ENCODE measurements at regions of chr1 and their contacts with region 1.

Region 1: DNA sequence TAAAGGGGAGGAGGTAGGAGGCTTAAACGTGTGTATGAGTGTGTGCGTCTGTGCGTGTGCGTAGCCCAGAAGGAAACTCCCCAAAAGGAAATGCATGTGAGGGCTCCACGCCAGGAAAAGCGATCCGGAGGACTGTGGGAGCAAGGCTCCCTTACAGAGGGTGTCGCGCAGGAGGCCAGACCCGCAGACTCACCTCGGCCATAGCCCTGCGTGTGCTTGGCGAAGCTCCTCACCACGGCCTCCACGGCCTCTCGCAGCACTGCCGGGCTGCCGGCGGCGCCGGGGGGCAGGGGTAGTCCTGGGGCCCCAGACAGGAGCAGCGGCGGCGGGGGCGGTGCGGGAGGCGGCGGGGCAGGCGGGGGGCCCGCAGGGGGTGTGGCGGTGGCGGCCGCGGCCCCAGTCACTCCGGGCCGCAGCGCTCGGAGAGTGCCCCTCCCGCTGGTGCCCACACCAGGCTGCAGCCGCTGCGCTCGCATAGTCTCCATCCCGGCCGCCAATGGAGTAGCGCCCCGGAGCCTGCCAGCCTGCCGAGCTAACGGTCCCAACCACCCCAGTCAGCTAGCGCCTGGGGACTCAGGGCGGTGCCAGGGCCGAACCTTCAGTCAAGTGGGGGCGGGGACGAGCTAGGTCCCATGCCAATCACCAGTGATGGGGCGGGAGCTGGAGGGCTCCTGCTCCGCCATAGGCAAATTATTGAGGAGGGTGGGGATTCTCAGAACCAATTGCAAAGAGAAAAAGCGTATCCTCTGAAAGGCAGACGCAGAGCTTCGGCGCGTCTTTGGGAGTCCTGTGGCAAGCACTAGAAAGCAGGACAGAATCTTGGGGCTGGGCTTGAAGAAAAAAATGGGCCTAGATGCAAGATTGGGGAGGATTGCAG is at the start of gene LIX1L:
- DNase-seq: peak; percentile 99
- ATAC-seq: peak; percentile 81
- H3K4me3 ChIP-seq: peak within 1 kb of the TSS; percentile 76
- H3K27ac ChIP-seq: 0 out of 2 replicates have a peak within 1 kb of the TSS, but pooled peaks have one; percentile 1
- H3K4me1 ChIP-seq: peaks cover 43% of the 10 kb centered on the region
- H3K27me3 ChIP-seq: no peaks in the 10 kb centered on the region
- CTCF ChIP-seq: no peak
- total RNA-seq, gene LIX1L: 12.5 and 13.6 TPM in 2 replicates

Region 2: DNA sequence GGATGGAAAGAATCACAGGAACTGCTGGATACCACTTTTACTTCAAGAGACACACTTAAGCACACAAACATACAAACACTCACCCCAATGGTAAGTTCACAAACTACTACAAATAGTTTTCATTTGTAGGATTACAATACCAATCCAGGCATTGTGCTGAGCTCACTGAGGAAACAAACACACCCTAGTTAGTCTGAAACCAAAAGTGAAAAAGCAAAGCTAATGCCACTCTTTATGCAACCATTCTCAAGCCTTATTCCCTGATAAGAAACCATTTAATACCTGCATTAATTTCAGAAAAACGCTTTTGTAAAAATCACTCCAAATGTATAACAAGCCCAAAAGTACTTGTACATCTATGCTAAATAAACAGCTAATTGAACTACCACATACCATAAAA is 172.1 kb before region 1 on chr1:
- CTCF ChIA-PET with region 1: no interaction called
- POLR2A ChIA-PET with region 1: no interaction called
- intact Hi-C with region 1: no loop called
- DNase-seq: peak; percentile 18
- ATAC-seq: peak; percentile 8; the same call in 1 of the 2 replicates
- H3K4me3 ChIP-seq: no peak overlapping the region
- H3K27ac ChIP-seq: no peak overlapping the region
- H3K4me1 ChIP-seq: peaks cover 40% of the 10 kb centered on the region
- H3K27me3 ChIP-seq: no peaks in the 10 kb centered on the region
- CTCF ChIP-seq: no peak

Region 3: DNA sequence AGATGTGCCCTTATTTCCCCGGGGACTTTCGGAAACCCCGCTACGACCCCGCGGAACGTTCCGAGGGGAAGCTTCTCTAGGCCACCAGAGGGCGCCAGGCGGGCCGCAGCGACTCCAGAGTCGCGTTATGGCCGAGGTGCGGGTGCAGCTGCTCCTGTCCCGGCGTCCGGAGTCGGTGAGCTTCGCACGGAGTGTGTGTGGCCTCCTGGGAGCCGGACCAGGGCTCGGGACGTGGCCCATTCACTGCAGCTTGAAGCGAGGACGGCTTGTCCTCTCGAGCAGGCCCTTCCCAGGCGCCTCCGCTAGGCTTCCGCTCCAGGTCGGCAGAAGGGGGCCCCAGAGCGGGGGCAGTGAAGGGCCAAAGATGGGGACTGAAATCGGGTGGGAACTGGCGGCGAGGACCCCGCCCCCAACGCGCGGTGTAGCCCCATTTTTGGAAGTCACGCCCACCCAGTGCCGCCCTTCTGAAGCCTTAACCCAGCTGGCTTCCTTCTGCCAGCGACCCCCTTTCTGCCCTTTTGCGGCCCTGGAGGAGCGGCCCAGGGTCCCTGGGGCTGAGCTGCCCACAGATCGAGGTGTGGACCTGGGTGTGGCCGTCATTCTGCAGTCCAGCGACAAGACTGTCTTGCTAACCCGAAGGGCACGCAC is 112.0 kb before region 1 on chr1 and contains the start of gene NUDT17:
- CTCF ChIA-PET with region 1: interaction called, 10 read pairs
- POLR2A ChIA-PET with region 1: no interaction called
- intact Hi-C with region 1: no loop called
- DNase-seq: peak; percentile 78
- ATAC-seq: peak; percentile 77
- H3K4me3 ChIP-seq: peak within 1 kb of the TSS; percentile 66
- H3K27ac ChIP-seq: no peak within 1 kb of the TSS
- H3K4me1 ChIP-seq: peaks cover 5% of the 10 kb centered on the region; the same call in 1 of the 2 replicates
- H3K27me3 ChIP-seq: no peaks in the 10 kb centered on the region
- CTCF ChIP-seq: peak; percentile 98
- total RNA-seq, gene NUDT17: 2.4 and 3.0 TPM in 2 replicates

Region 4: DNA sequence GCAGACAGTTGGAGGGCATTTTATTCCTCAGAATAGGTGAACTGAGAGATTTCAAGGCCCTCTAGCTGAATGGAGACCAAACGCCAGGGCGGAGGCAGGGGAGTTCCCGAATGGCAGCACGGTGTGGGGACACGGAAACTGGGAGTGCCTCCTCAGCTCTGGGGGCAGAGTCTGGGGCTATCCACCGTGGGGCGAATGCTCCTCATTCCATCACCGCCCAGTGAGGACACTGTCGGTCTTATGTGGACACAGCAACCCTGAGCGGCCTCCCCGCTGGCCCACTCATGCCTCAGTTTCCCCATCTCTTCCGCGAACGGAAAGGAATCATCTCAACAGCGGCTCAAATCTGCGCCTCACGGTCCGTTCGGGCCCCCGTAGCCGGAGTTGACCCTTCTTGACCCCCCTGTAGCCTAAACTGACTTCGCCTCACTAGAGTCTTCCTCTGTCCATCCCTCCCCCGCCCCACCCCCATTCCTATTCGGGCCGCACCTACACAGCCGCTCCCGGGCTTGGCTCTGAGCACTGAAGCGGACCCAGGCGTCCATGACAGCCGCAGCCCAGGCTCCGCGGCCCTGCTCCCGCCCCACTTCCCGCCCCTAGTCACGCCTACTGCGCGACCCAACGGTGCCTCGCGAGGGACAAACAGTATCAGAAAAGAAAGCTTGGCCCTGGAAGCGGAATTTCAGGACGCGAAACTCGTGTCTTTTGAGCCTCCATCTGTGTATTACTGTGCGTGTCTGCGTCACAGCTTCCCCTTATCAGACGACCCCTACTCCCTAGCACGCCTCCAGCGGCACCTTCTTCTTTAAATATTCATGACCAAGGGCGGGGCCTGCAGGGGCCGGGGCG is 39.3 kb before region 1 on chr1 and contains the start of gene PEX11B:
- CTCF ChIA-PET with region 1: interaction called, 3 read pairs
- POLR2A ChIA-PET with region 1: interaction called, 5 read pairs
- intact Hi-C with region 1: loop called (anchors 5 kb)
- DNase-seq: peak; percentile 86
- ATAC-seq: peak; percentile 79
- H3K4me3 ChIP-seq: peak within 1 kb of the TSS; percentile 81
- H3K27ac ChIP-seq: peak within 1 kb of the TSS; percentile 72
- H3K4me1 ChIP-seq: peaks cover 24% of the 10 kb centered on the region
- H3K27me3 ChIP-seq: no peaks in the 10 kb centered on the region
- CTCF ChIP-seq: no peak
- total RNA-seq, gene PEX11B: 27.4 and 31.3 TPM in 2 replicates

Region 5: GRCh38 chr1:145927063-145927886 is 30.4 kb before region 1 on chr1 and contains the start of gene RBM8A:
- CTCF ChIA-PET with region 1: interaction called, 6 read pairs
- POLR2A ChIA-PET with region 1: interaction called, 12 read pairs
- intact Hi-C with region 1: loop called (anchors 1 kb)
- DNase-seq: peak; percentile 99
- ATAC-seq: peak; percentile 99
- H3K4me3 ChIP-seq: peak within 1 kb of the TSS; percentile 75
- H3K27ac ChIP-seq: peak within 1 kb of the TSS; percentile 83
- H3K4me1 ChIP-seq: peaks cover 13% of the 10 kb centered on the region
- H3K27me3 ChIP-seq: no peaks in the 10 kb centered on the region
- CTCF ChIP-seq: peak; percentile 81
- total RNA-seq, gene RBM8A: 459 and 482 TPM in 2 replicates

Region 6: DNA sequence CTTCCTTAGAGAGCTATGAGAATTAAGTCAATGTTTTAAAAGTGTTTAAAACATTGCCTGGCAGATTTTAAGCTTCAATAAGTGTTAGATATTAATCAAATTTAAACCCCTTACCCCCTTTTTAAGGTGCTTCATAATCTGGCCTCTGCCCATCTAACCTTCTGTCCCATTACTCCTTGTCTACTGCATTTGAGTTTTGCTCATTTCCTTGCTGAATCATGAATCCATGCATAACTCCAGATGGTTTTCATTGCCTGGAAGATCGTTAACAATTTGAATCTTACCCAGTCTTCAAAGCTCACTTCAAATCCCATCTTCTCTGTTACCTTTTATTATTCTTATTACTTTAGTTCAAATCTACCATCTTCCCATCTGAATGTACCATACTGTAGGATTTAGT is 59.2 kb after region 1 on chr1:
- CTCF ChIA-PET with region 1: no interaction called
- POLR2A ChIA-PET with region 1: no interaction called
- intact Hi-C with region 1: no loop called
- DNase-seq: no peak
- ATAC-seq: no peak
- H3K4me3 ChIP-seq: no peak overlapping the region
- H3K27ac ChIP-seq: no peak overlapping the region
- H3K4me1 ChIP-seq: peaks cover 4% of the 10 kb centered on the region; the same call in 1 of the 2 replicates
- H3K27me3 ChIP-seq: 0 out of 2 replicates have a peak, but pooled peaks cover 6% of the 10 kb centered on the region
- CTCF ChIP-seq: no peak

Measured in PC-3 (cell line).